WTC11 (cell line): ENCODE measurements at regions of chr18 and their contacts with region 1.

Region 1: DNA sequence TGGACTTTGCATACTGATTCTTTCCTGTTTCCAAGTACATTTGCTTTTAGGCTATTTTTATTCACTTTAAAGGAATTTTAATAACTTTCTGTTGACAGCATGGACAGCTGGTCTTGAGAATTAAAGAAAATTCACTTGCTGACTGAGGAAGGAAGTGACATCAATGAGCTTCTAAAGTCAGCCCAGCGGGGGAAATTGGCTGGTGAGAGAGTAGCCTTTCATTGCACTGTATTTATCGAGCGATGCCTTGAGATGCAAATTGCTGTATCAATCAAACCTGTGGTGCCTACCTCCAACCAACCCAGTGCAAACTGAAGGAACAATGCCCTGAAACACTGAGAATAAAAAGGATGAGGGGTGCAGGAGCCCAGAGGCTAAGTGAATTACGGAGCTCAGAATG is 91.4 kb upstream of the AQP4 start:
- DNase-seq: peak; percentile 58
- ATAC-seq: peak; percentile 99
- H3K4me3 Mint-ChIP-seq: 0 out of 2 replicates have a peak overlapping the region, but pooled peaks have one; percentile 14
- H3K27ac Mint-ChIP-seq: peak overlapping the region; percentile 42
- H3K4me1 Mint-ChIP-seq: peaks cover 44% of the 10 kb centered on the region
- H3K27me3 Mint-ChIP-seq: no peaks in the 10 kb centered on the region
- CTCF ChIP-seq: no peak

Region 2: GRCh38 chr18:26804519-26804918 is 152.3 kb before region 1 on chr18:
- CTCF ChIA-PET with region 1: interaction called, 10 read pairs
- POLR2A ChIA-PET with region 1: no interaction called
- DNase-seq: peak; percentile 15
- ATAC-seq: peak; percentile 67
- H3K4me3 Mint-ChIP-seq: no peak overlapping the region
- H3K27ac Mint-ChIP-seq: no peak overlapping the region
- H3K4me1 Mint-ChIP-seq: 0 out of 2 replicates have a peak, but pooled peaks cover 7% of the 10 kb centered on the region
- H3K27me3 Mint-ChIP-seq: no peaks in the 10 kb centered on the region
- CTCF ChIP-seq: no peak

Region 3: GRCh38 chr18:26909599-26910290 is 47.1 kb before region 1 on chr18:
- CTCF ChIA-PET with region 1: no interaction called
- POLR2A ChIA-PET with region 1: no interaction called
- DNase-seq: no peak
- ATAC-seq: peak; percentile 82
- H3K4me3 Mint-ChIP-seq: no peak overlapping the region
- H3K27ac Mint-ChIP-seq: no peak overlapping the region
- H3K4me1 Mint-ChIP-seq: peaks cover 15% of the 10 kb centered on the region
- H3K27me3 Mint-ChIP-seq: peaks cover 2% of the 10 kb centered on the region; the same call in 1 of the 2 replicates
- CTCF ChIP-seq: no peak